ENCODE measurements at regions of chr6 and their contacts with region 1.

Region 1: DNA sequence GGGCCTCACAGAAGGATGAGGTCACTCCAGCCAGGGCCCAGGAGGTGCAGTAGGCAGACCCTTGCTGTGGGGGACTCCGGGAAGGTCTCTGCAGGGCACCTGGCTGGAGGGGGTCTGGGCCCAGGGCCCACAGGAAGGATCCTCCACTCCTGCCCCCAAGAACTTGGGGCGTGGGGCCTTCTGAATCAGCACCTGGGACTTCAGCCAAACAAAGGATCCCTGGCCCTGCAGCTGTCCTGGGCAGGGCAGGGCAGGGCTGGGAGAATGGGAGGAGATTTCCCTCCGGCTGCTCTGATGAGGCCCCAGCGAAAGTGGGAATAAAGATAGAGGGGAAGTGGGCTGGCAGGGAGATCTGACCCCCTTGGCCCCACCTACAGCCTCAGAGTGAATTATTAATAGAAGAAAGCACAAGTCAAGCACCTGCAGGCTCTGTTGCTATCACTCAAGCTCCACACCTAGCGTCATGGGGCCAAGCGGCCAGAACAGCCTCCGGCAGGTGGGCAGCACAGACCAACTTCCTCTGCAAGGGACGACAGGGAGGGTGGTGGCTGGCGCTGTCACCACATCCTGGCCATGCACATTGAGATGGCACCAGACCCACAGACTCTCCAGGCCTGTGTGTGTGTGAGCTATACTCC is 61.6 kb upstream of the MRPS10 start:
- DNase-seq: peak; percentile 46 to 62
- ATAC-seq: peak; percentile 64 to 90 (median 84)
- H3K4me3 ChIP-seq: no peak overlapping the region
- H3K4me3 Mint-ChIP-seq: peak overlapping the region; percentile 80
- H3K27ac ChIP-seq: peak overlapping the region; percentile 76
- H3K27ac Mint-ChIP-seq: peak overlapping the region; percentile 86 to 91
- H3K4me1 ChIP-seq: peaks cover 73% of the 10 kb centered on the region
- H3K4me1 Mint-ChIP-seq: peaks cover 86 to 88% of the 10 kb centered on the region in 2 donors
- H3K27me3 ChIP-seq: no peaks in the 10 kb centered on the region
- H3K27me3 Mint-ChIP-seq: no peaks in the 10 kb centered on the region
- CTCF ChIP-seq: no peak

Region 2: DNA sequence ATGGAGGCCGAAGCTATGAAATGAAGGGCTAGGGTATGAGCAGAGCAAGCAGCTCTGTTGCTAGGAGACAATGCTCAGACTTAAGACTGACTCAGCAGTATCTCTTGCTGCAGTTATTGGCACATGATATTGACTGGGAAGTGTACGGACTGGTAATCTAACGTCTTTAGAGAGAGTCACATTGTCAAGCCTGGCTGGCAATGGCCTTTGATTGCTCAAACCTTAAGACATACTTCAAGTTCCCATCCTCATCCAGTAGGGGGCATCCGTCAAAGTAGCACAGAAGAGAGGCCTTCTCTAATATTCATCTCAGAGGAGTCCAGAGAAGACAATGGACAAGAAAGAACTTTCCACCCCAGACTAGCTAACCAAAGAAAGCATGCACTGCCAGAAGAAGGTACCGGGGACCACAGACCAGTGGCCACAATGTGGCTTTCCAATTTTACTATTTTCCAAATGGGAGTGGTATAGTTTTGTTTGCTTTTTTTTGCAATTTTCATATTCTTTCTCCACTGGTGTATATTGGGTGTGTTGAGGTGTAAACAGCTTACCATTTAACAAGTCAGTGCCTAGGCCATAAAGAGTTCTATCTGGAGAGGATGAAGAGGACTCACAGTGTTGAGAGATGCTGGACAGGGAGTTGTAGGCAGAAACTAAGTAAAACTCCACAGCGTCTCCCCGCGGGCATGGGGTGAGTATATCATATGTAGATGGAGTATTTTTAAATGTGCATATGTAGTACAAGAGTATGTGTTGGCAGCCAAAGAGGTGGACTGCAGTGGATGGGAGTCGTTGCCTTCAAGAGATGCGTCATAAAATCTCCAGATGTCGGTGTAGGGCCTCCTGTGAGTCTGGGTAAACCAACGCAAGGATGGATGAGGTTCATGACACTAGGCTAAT is 1728.8 kb before region 1 on chr6:
- intact Hi-C with region 1: no loop called
- DNase-seq: peak in 1 of 2 donors; percentile 52
- ATAC-seq: peak; percentile 55 to 75 (median 72)
- H3K4me3 ChIP-seq: no peak overlapping the region
- H3K4me3 Mint-ChIP-seq: no peak overlapping the region
- H3K27ac ChIP-seq: no peak overlapping the region
- H3K27ac Mint-ChIP-seq: no peak overlapping the region
- H3K4me1 ChIP-seq: no peaks in the 10 kb centered on the region
- H3K4me1 Mint-ChIP-seq: peaks cover 6 to 7% of the 10 kb centered on the region in 2 donors
- H3K27me3 ChIP-seq: no peaks in the 10 kb centered on the region
- H3K27me3 Mint-ChIP-seq: no peaks in the 10 kb centered on the region
- CTCF ChIP-seq: peak; percentile 59

Region 3: DNA sequence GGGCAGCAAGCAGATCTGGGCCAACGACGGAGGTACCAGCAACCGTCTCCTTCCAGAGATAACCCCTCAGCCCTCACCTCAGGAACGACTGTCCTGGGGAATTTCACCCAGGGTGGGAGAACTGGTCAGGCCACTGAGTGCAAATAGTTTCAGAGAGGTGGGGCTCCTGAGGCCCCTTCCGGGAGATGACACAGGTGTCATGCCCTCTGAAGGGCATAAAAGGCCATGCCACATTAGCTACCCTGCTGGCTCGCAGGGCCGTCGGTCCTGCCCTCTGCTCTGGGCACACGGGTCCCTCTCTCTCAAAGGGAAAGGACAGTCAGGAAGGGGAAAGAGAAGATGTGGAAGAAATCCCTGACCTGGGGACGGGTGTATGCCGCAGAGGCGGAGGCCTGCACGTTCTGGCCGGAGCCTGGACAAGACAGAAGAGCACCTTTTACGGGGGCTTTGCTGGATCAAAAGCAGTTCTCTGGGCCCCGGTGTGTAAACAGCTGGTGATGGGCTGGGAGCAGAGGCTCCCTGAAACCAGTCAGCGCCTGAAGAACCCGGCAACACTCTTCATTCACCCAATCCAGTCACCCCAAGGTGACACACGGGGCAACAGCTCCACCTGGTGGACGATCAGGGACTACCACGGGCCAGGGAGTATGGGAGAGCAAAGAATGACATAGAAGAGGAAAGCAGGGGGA is 235.3 kb before region 1 on chr6:
- intact Hi-C with region 1: no loop called
- DNase-seq: peak; percentile 93 to 95
- ATAC-seq: peak; percentile 64 to 82 (median 68)
- H3K4me3 ChIP-seq: peak overlapping the region; percentile 11
- H3K4me3 Mint-ChIP-seq: peak overlapping the region; percentile 91
- H3K27ac ChIP-seq: peak overlapping the region; percentile 57
- H3K27ac Mint-ChIP-seq: peak overlapping the region; percentile 87 to 97
- H3K4me1 ChIP-seq: peaks cover 86% of the 10 kb centered on the region
- H3K4me1 Mint-ChIP-seq: peaks cover 84 to 93% of the 10 kb centered on the region in 2 donors
- H3K27me3 ChIP-seq: no peaks in the 10 kb centered on the region
- H3K27me3 Mint-ChIP-seq: no peaks in the 10 kb centered on the region
- CTCF ChIP-seq: peak; percentile 91

Region 4: DNA sequence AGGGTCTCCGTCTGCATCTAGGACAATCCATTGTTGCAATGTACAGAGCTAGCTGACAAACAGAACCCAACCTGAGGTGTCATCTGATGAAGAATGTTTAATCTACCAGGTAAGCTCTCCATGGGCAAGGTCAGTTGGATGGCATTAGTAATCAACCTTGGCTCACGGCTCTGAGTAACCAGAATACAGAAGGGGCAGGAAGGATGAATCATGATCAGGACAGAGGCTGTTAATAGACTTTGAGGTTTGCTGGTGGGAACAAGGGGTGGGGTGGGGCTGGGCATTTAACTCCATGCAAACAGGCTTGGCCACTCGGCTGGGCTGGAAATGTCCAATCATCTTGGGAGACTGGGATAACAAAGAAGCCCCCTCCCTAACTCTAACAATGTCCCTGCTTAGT is 15.5 kb after region 1 on chr6:
- intact Hi-C with region 1: loop called (anchors 2 kb)
- DNase-seq: peak in 1 of 2 donors; percentile 24
- ATAC-seq: peak; percentile 53 to 64 (median 58)
- H3K4me3 ChIP-seq: no peak overlapping the region
- H3K4me3 Mint-ChIP-seq: peak overlapping the region; percentile 87
- H3K27ac ChIP-seq: peak overlapping the region; percentile 19
- H3K27ac Mint-ChIP-seq: peak overlapping the region; percentile 84 to 88
- H3K4me1 ChIP-seq: peaks cover 67% of the 10 kb centered on the region
- H3K4me1 Mint-ChIP-seq: peaks cover 62 to 67% of the 10 kb centered on the region in 2 donors
- H3K27me3 ChIP-seq: no peaks in the 10 kb centered on the region
- H3K27me3 Mint-ChIP-seq: no peaks in the 10 kb centered on the region
- CTCF ChIP-seq: no peak

Measured in natural killer cell (primary cell).